OCI-LY7 (cell line): ENCODE measurements at regions of chr12 and their contacts with region 1.

Region 1: GRCh38 chr12:31650927-31651326 is 8.6 kb upstream of the ETFBKMT start:
- DNase-seq: no peak
- H3K4me3 ChIP-seq: no peak overlapping the region
- H3K27ac ChIP-seq: no peak overlapping the region
- H3K4me1 ChIP-seq: peaks cover 16% of the 10 kb centered on the region
- CTCF ChIP-seq: no peak

Region 2: GRCh38 chr12:31250179-31250578 is 400.7 kb before region 1 on chr12:
- CTCF ChIA-PET with region 1: no interaction called
- POLR2A ChIA-PET with region 1: interaction called, 3 read pairs
- intact Hi-C with region 1: loop called (anchors 5 kb)
- DNase-seq: peak; percentile 12
- H3K4me3 ChIP-seq: no peak overlapping the region
- H3K27ac ChIP-seq: no peak overlapping the region
- H3K4me1 ChIP-seq: peaks cover 9% of the 10 kb centered on the region
- CTCF ChIP-seq: peak; percentile 49